WTC11 (cell line): ENCODE measurements at regions of chr17 and their contacts with region 1.

Region 1: GRCh38 chr17:44210342-44211192 is 8.9 kb downstream of the UBTF start:
- DNase-seq: peak; percentile 94
- ATAC-seq: peak; percentile 89
- H3K4me3 Mint-ChIP-seq: no peak overlapping the region
- H3K27ac Mint-ChIP-seq: peak overlapping the region; percentile 42
- H3K4me1 Mint-ChIP-seq: peaks cover 20% of the 10 kb centered on the region
- H3K27me3 Mint-ChIP-seq: no peaks in the 10 kb centered on the region
- CTCF ChIP-seq: peak; percentile 95

Region 2: GRCh38 chr17:44110823-44111633 is 99.5 kb before region 1 on chr17:
- CTCF ChIA-PET with region 1: no interaction called
- POLR2A ChIA-PET with region 1: no interaction called
- DNase-seq: peak; percentile 82
- ATAC-seq: peak; percentile 75
- H3K4me3 Mint-ChIP-seq: peak overlapping the region; percentile 49
- H3K27ac Mint-ChIP-seq: no peak overlapping the region
- H3K4me1 Mint-ChIP-seq: peaks cover 48% of the 10 kb centered on the region
- H3K27me3 Mint-ChIP-seq: no peaks in the 10 kb centered on the region
- CTCF ChIP-seq: no peak

Region 3: GRCh38 chr17:44186307-44187130 is 24.0 kb before region 1 on chr17 and contains the start of gene TMUB2:
- CTCF ChIA-PET with region 1: interaction called, 22 read pairs
- POLR2A ChIA-PET with region 1: interaction called, 3 read pairs
- DNase-seq: peak; percentile 100
- ATAC-seq: peak; percentile 93
- H3K4me3 Mint-ChIP-seq: peak within 1 kb of the TSS; percentile 100
- H3K27ac Mint-ChIP-seq: peak within 1 kb of the TSS; percentile 99
- H3K4me1 Mint-ChIP-seq: peaks cover 18% of the 10 kb centered on the region
- H3K27me3 Mint-ChIP-seq: no peaks in the 10 kb centered on the region
- CTCF ChIP-seq: no peak
- total RNA-seq, gene TMUB2: 21.9 to 26.9 TPM (median 25.3 TPM) in 3 replicates

Region 4: GRCh38 chr17:44241106-44241624 is 30.6 kb after region 1 on chr17:
- CTCF ChIA-PET with region 1: no interaction called
- POLR2A ChIA-PET with region 1: no interaction called
- DNase-seq: no peak
- ATAC-seq: no peak
- H3K4me3 Mint-ChIP-seq: no peak overlapping the region
- H3K27ac Mint-ChIP-seq: no peak overlapping the region
- H3K4me1 Mint-ChIP-seq: peaks cover 4% of the 10 kb centered on the region
- H3K27me3 Mint-ChIP-seq: peaks cover 5% of the 10 kb centered on the region; the same call in 1 of the 2 replicates
- CTCF ChIP-seq: no peak

Region 5: DNA sequence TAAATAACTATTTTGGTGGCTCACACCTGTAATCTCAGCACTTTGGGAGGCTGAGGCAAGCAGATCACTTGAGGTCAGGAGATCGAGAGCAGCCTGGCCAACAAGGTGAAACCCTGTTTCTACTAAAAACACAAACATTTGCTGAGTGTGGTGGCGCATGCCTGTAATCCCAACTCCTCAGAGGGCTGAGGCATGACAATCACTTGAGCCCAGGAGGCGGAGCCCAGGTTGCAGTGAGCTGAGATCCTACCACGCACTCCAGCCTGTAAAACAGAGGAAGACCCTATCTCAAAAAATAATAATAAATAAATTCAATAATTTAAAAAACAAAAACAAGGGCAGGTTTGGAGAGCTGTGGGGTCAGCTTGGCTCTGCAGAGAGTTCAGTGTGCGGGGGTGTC is 63.0 kb after region 1 on chr17:
- CTCF ChIA-PET with region 1: interaction called, 10 read pairs
- POLR2A ChIA-PET with region 1: no interaction called
- DNase-seq: no peak
- ATAC-seq: peak; percentile 82
- H3K4me3 Mint-ChIP-seq: no peak overlapping the region
- H3K27ac Mint-ChIP-seq: no peak overlapping the region
- H3K4me1 Mint-ChIP-seq: peaks cover 20% of the 10 kb centered on the region
- H3K27me3 Mint-ChIP-seq: no peaks in the 10 kb centered on the region; the same call in 1 of the 2 replicates
- CTCF ChIP-seq: no peak

Region 6: GRCh38 chr17:44314869-44315661 is 104.5 kb after region 1 on chr17:
- CTCF ChIA-PET with region 1: interaction called, 77 read pairs
- POLR2A ChIA-PET with region 1: interaction called, 3 read pairs
- DNase-seq: peak; percentile 76
- ATAC-seq: peak; percentile 13
- H3K4me3 Mint-ChIP-seq: peak overlapping the region; percentile 79
- H3K27ac Mint-ChIP-seq: no peak overlapping the region
- H3K4me1 Mint-ChIP-seq: peaks cover 39% of the 10 kb centered on the region
- H3K27me3 Mint-ChIP-seq: peaks cover 37% of the 10 kb centered on the region
- CTCF ChIP-seq: no peak

Region 7: GRCh38 chr17:44331249-44331760 is 120.7 kb after region 1 on chr17:
- CTCF ChIA-PET with region 1: interaction called, 37 read pairs
- POLR2A ChIA-PET with region 1: interaction called, 3 read pairs
- DNase-seq: peak; percentile 80
- ATAC-seq: peak; percentile 19
- H3K4me3 Mint-ChIP-seq: no peak overlapping the region
- H3K27ac Mint-ChIP-seq: no peak overlapping the region
- H3K4me1 Mint-ChIP-seq: peaks cover 17% of the 10 kb centered on the region
- H3K27me3 Mint-ChIP-seq: peaks cover 3% of the 10 kb centered on the region; the same call in 1 of the 2 replicates
- CTCF ChIP-seq: peak; percentile 76

Region 8: GRCh38 chr17:44543213-44543904 is 332.8 kb after region 1 on chr17:
- CTCF ChIA-PET with region 1: no interaction called
- POLR2A ChIA-PET with region 1: no interaction called
- DNase-seq: peak; percentile 85
- ATAC-seq: peak; percentile 68
- H3K4me3 Mint-ChIP-seq: peak overlapping the region; percentile 60
- H3K27ac Mint-ChIP-seq: peak overlapping the region; percentile 41
- H3K4me1 Mint-ChIP-seq: peaks cover 93% of the 10 kb centered on the region
- H3K27me3 Mint-ChIP-seq: peaks cover 89% of the 10 kb centered on the region
- CTCF ChIP-seq: no peak